ENCODE measurements at regions of chr2 and their contacts with region 1.

Region 1: DNA sequence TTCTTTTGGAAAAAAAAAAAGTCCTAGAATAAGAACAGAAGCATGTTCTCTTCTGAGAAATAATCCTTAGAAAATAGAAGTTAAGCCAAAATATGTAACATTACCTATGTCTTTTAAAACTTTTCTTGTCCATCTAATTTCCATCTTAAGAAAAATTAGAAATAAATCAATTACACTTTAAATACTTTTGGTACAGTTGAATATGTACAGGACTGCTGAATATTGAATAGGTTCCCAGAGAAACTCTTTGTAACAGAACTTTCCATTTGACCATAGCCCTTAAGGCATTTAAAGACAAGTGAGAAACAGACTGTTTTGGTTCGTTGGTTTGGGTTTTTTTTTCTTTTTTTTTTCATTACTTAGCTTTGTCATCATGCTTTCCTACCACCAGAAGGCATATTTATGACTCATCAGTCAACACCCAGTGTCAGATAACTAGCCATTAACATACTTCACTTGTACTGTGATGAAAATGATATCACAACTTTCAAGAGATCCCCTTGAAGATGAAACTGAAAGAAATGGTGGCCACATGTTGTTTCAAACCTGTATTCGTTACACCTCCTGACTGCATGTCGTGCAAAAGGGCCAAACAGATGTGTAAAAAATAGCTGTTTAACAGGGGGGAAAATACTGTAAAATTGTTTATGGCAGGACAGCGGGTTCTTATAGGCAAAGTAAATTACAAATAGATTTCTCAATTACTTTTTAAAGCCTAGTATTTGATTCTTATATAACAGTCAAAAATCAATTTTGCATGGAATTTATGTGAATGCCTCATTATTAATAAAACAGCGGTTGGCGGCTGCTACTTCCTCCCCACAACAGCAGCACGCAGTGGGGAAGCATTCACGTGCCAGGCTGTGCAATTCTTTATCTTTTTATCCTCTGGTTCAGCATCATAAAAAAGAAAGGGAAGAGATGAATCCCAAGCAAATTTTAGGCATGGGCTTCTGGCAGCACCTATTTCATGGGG is 280.7 kb upstream of the HNRNPA3 start:
- DNase-seq: no peak
- ATAC-seq: no peak
- H3K4me3 ChIP-seq: no peak overlapping the region
- H3K27ac ChIP-seq: no peak overlapping the region
- H3K4me1 ChIP-seq: no peaks in the 10 kb centered on the region
- H3K27me3 ChIP-seq: no peaks in the 10 kb centered on the region
- CTCF ChIP-seq: no peak

Region 2: GRCh38 chr2:176333685-176334084 is 598.2 kb before region 1 on chr2:
- CTCF ChIA-PET with region 1: interaction called, 13 read pairs
- POLR2A ChIA-PET with region 1: no interaction called
- in situ Hi-C with region 1: no loop called
- intact Hi-C with region 1: no loop called
- DNase-seq: no peak
- ATAC-seq: no peak
- H3K4me3 ChIP-seq: no peak overlapping the region
- H3K27ac ChIP-seq: no peak overlapping the region
- H3K4me1 ChIP-seq: no peaks in the 10 kb centered on the region
- H3K27me3 ChIP-seq: no peaks in the 10 kb centered on the region
- CTCF ChIP-seq: no peak